ENCODE measurements at regions of chr9 and their contacts with region 1.

Region 1: GRCh38 chr9:19174127-19174912 is 47.0 kb upstream of the PLIN2 start:
- DNase-seq: peak in 6 of 9 experiments; percentile 8 to 71 (median 46)
- ATAC-seq: peak; percentile 75
- H3K4me3 ChIP-seq: no peak overlapping the region
- H3K4me3 Mint-ChIP-seq: no peak overlapping the region
- H3K27ac ChIP-seq: no peak overlapping the region
- H3K27ac Mint-ChIP-seq: no peak overlapping the region
- H3K4me1 ChIP-seq: peaks cover 25% of the 10 kb centered on the region
- H3K4me1 Mint-ChIP-seq: peaks cover 30% of the 10 kb centered on the region
- H3K27me3 ChIP-seq: no peaks in the 10 kb centered on the region
- H3K27me3 Mint-ChIP-seq: no peaks in the 10 kb centered on the region
- CTCF ChIP-seq: peak; percentile 80

Region 2: GRCh38 chr9:18255158-18255629 is 919.1 kb before region 1 on chr9:
- CTCF ChIA-PET with region 1: interaction called, 8 read pairs
- POLR2A ChIA-PET with region 1: no interaction called
- intact Hi-C with region 1: loop called in 1 of 2 experiments (anchors 2 kb)
- DNase-seq: peak; percentile 25 to 81 (median 71)
- ATAC-seq: peak; percentile 78
- H3K4me3 ChIP-seq: no peak overlapping the region
- H3K4me3 Mint-ChIP-seq: no peak overlapping the region
- H3K27ac ChIP-seq: no peak overlapping the region
- H3K27ac Mint-ChIP-seq: no peak overlapping the region
- H3K4me1 ChIP-seq: no peaks in the 10 kb centered on the region
- H3K4me1 Mint-ChIP-seq: no peaks in the 10 kb centered on the region
- H3K27me3 ChIP-seq: no peaks in the 10 kb centered on the region
- H3K27me3 Mint-ChIP-seq: peaks cover 9% of the 10 kb centered on the region
- CTCF ChIP-seq: peak; percentile 100

Region 3: GRCh38 chr9:18507151-18507550 is 667.2 kb before region 1 on chr9:
- CTCF ChIA-PET with region 1: no interaction called
- POLR2A ChIA-PET with region 1: no interaction called
- intact Hi-C with region 1: no loop called
- DNase-seq: no peak
- ATAC-seq: no peak
- H3K4me3 ChIP-seq: no peak overlapping the region
- H3K4me3 Mint-ChIP-seq: no peak overlapping the region
- H3K27ac ChIP-seq: no peak overlapping the region
- H3K27ac Mint-ChIP-seq: no peak overlapping the region
- H3K4me1 ChIP-seq: no peaks in the 10 kb centered on the region
- H3K4me1 Mint-ChIP-seq: no peaks in the 10 kb centered on the region
- H3K27me3 ChIP-seq: no peaks in the 10 kb centered on the region
- H3K27me3 Mint-ChIP-seq: no peaks in the 10 kb centered on the region
- CTCF ChIP-seq: no peak

Region 4: GRCh38 chr9:18985464-18985951 is 188.8 kb before region 1 on chr9:
- CTCF ChIA-PET with region 1: no interaction called
- POLR2A ChIA-PET with region 1: no interaction called
- intact Hi-C with region 1: no loop called
- DNase-seq: no peak
- ATAC-seq: no peak
- H3K4me3 ChIP-seq: no peak overlapping the region
- H3K4me3 Mint-ChIP-seq: no peak overlapping the region
- H3K27ac ChIP-seq: no peak overlapping the region
- H3K27ac Mint-ChIP-seq: no peak overlapping the region
- H3K4me1 ChIP-seq: no peaks in the 10 kb centered on the region
- H3K4me1 Mint-ChIP-seq: no peaks in the 10 kb centered on the region
- H3K27me3 ChIP-seq: no peaks in the 10 kb centered on the region
- H3K27me3 Mint-ChIP-seq: no peaks in the 10 kb centered on the region
- CTCF ChIP-seq: no peak

Region 5: DNA sequence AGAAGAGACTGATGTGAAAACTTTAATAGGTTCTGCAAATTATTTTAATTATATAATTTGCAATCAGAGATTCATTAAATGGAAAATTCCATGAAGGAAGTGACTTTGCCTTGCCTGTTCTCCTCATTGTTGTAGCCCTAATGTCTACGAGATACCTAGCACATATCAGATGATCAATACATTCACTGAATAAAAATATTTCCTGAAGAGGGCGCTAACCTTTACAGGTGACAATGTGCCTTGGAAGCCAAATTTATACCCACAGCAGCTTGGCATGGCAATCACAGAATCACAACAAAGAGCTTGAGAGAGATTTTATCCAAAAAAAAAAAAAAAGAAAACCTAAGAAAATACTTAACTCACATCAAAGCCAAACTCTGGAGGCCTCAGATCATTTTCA is 89.0 kb before region 1 on chr9:
- CTCF ChIA-PET with region 1: interaction called, 68 read pairs
- POLR2A ChIA-PET with region 1: interaction called, 3 read pairs
- intact Hi-C with region 1: loop called (anchors 1 kb)
- DNase-seq: peak in 2 of 9 experiments; percentile 51 to 66
- ATAC-seq: peak; percentile 71
- H3K4me3 ChIP-seq: no peak overlapping the region
- H3K4me3 Mint-ChIP-seq: no peak overlapping the region
- H3K27ac ChIP-seq: no peak overlapping the region
- H3K27ac Mint-ChIP-seq: no peak overlapping the region
- H3K4me1 ChIP-seq: no peaks in the 10 kb centered on the region
- H3K4me1 Mint-ChIP-seq: peaks cover 3% of the 10 kb centered on the region
- H3K27me3 ChIP-seq: no peaks in the 10 kb centered on the region
- H3K27me3 Mint-ChIP-seq: no peaks in the 10 kb centered on the region
- CTCF ChIP-seq: peak; percentile 56

Region 6: GRCh38 chr9:19127881-19128500 is 46.3 kb before region 1 on chr9:
- CTCF ChIA-PET with region 1: interaction called, 7 read pairs
- POLR2A ChIA-PET with region 1: no interaction called
- intact Hi-C with region 1: loop called in 1 of 2 experiments (anchors 2 kb)
- DNase-seq: peak in 7 of 9 experiments; percentile 7 to 68 (median 46)
- ATAC-seq: peak; percentile 19
- H3K4me3 ChIP-seq: peak overlapping the region; percentile 62 to 70
- H3K4me3 Mint-ChIP-seq: peak overlapping the region; percentile 93
- H3K27ac ChIP-seq: peak overlapping the region; percentile 83 to 91
- H3K27ac Mint-ChIP-seq: peak overlapping the region; percentile 94
- H3K4me1 ChIP-seq: peaks cover 48% of the 10 kb centered on the region
- H3K4me1 Mint-ChIP-seq: peaks cover 53% of the 10 kb centered on the region
- H3K27me3 ChIP-seq: no peaks in the 10 kb centered on the region
- H3K27me3 Mint-ChIP-seq: no peaks in the 10 kb centered on the region
- CTCF ChIP-seq: no peak

Region 7: GRCh38 chr9:19184144-19184917 is 10.0 kb after region 1 on chr9:
- CTCF ChIA-PET with region 1: interaction called, 29 read pairs
- POLR2A ChIA-PET with region 1: no interaction called
- intact Hi-C with region 1: loop called in 1 of 2 experiments (anchors 1 kb)
- DNase-seq: peak; percentile 49 to 94 (median 82)
- ATAC-seq: peak; percentile 99
- H3K4me3 ChIP-seq: peak overlapping the region in 1 of 2 experiments; percentile 3
- H3K4me3 Mint-ChIP-seq: peak overlapping the region; percentile 71
- H3K27ac ChIP-seq: peak overlapping the region; percentile 55 to 87
- H3K27ac Mint-ChIP-seq: peak overlapping the region; percentile 96
- H3K4me1 ChIP-seq: peaks cover 34% of the 10 kb centered on the region
- H3K4me1 Mint-ChIP-seq: peaks cover 25% of the 10 kb centered on the region
- H3K27me3 ChIP-seq: no peaks in the 10 kb centered on the region
- H3K27me3 Mint-ChIP-seq: no peaks in the 10 kb centered on the region
- CTCF ChIP-seq: no peak